Mammary epithelial cell (primary cell): ENCODE measurements at regions of chr6 and their contacts with region 1.

Region 1: GRCh38 chr6:57316581-57317059 is 810 bp upstream of the PRIM2 start:
- DNase-seq: peak; percentile 87
- H3K4me3 ChIP-seq: peak overlapping the region; percentile 74 to 87 (median 85)
- H3K27ac ChIP-seq: peak overlapping the region; percentile 83
- H3K4me1 ChIP-seq: peaks cover 33% of the 10 kb centered on the region
- H3K27me3 ChIP-seq: no peaks in the 10 kb centered on the region
- CTCF ChIP-seq: peak; percentile 75 to 84

Region 2: DNA sequence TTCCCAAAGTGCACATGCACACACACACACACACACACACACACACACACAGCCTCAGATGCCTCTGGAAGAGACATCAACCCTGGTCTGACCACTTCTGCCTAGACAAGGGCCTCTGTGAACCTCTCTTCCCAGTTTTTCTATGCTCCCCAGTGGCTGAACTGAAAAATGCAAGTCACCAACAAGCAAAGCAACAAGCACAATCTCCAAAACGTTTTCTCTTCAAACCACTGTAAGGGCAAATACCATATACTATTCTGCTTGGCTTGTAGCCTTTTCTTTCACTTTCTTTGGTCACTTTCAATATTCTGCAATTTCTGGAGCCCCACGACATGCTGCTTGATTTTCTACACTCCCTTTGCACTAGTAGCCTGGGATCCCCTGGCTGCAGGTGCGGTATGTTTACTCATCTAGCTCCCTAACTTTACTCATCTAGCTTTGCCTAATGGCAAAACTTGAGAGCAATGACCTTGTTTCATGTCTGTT is 552.5 kb before region 1 on chr6:
- CTCF ChIA-PET with region 1: no interaction called
- dilution Hi-C with region 1: no loop called
- in situ Hi-C with region 1: no loop called
- intact Hi-C with region 1: loop called (anchors 5 kb)
- DNase-seq: peak; percentile 62
- H3K4me3 ChIP-seq: no peak overlapping the region
- H3K27ac ChIP-seq: no peak overlapping the region
- H3K4me1 ChIP-seq: peaks cover 29% of the 10 kb centered on the region
- H3K27me3 ChIP-seq: no peaks in the 10 kb centered on the region
- CTCF ChIP-seq: peak; percentile 57 to 63

Region 3: GRCh38 chr6:56949925-56950495 is 366.6 kb before region 1 on chr6:
- CTCF ChIA-PET with region 1: interaction called, 5 read pairs
- dilution Hi-C with region 1: loop called (anchors 10 kb)
- in situ Hi-C with region 1: no loop called
- intact Hi-C with region 1: loop called (anchors 1 kb)
- DNase-seq: no peak
- H3K4me3 ChIP-seq: no peak overlapping the region
- H3K27ac ChIP-seq: no peak overlapping the region
- H3K4me1 ChIP-seq: peaks cover 32% of the 10 kb centered on the region
- H3K27me3 ChIP-seq: no peaks in the 10 kb centered on the region
- CTCF ChIP-seq: no peak

Region 4: GRCh38 chr6:57021086-57021720 is 295.4 kb before region 1 on chr6:
- CTCF ChIA-PET with region 1: no interaction called
- dilution Hi-C with region 1: no loop called
- in situ Hi-C with region 1: no loop called
- intact Hi-C with region 1: loop called (anchors 1 kb)
- DNase-seq: peak; percentile 30
- H3K4me3 ChIP-seq: no peak overlapping the region
- H3K27ac ChIP-seq: no peak overlapping the region
- H3K4me1 ChIP-seq: no peaks in the 10 kb centered on the region
- H3K27me3 ChIP-seq: no peaks in the 10 kb centered on the region
- CTCF ChIP-seq: peak; percentile 47 to 53

Region 5: DNA sequence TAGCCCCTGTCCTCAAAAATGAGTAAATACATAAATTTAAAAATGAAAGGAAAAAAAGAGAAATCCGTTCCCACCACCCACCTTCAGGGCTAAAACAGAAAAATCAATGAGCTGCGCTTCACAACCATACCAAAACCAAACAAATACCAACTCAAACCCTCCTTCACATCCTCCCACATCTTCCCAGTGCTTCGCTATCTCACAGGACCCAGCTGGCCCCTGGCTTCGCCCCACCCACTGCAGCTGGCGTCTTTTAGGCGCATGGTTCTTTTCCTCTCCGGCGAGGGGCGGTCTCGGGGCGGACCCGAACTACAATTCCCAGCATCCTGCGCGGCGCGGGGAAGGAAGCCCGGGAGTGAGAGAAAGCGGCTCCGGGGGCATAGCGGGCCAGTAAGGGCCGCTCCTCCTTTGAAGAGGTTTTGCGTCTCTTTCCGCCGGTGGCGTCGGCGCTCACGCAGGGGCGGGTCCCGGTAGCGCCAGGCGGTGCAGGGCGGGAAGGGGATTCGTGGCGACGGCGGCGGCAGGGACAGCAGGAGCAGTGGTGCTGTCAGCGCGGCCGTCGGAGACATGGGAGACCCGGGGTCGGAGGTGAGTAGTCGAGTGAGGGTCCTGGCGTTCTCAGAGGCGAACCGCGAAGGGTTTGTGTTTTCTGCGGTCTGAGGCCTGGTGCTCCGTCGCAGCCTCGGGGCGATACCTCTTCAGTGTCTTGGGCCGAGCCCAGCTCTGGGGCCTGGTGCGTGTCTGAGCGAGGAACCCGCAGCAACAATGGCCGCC is 226.7 kb before region 1 on chr6 and contains the start of gene ZNF451:
- CTCF ChIA-PET with region 1: no interaction called
- dilution Hi-C with region 1: no loop called
- in situ Hi-C with region 1: no loop called
- intact Hi-C with region 1: loop called (anchors 5 kb)
- DNase-seq: peak; percentile 97
- H3K4me3 ChIP-seq: peak within 1 kb of the TSS; percentile 66 to 70 (median 68)
- H3K27ac ChIP-seq: peak within 1 kb of the TSS; percentile 62
- H3K4me1 ChIP-seq: peaks cover 11% of the 10 kb centered on the region
- H3K27me3 ChIP-seq: no peaks in the 10 kb centered on the region
- CTCF ChIP-seq: no peak
- total RNA-seq, gene ZNF451: 63.0 to 71.7 TPM

Region 6: GRCh38 chr6:57158658-57159057 is 158.0 kb before region 1 on chr6:
- CTCF ChIA-PET with region 1: no interaction called
- dilution Hi-C with region 1: no loop called
- in situ Hi-C with region 1: no loop called
- intact Hi-C with region 1: no loop called
- DNase-seq: peak; percentile 58
- H3K4me3 ChIP-seq: no peak overlapping the region
- H3K27ac ChIP-seq: no peak overlapping the region
- H3K4me1 ChIP-seq: peaks cover 17% of the 10 kb centered on the region
- H3K27me3 ChIP-seq: no peaks in the 10 kb centered on the region
- CTCF ChIP-seq: no peak

Region 7: DNA sequence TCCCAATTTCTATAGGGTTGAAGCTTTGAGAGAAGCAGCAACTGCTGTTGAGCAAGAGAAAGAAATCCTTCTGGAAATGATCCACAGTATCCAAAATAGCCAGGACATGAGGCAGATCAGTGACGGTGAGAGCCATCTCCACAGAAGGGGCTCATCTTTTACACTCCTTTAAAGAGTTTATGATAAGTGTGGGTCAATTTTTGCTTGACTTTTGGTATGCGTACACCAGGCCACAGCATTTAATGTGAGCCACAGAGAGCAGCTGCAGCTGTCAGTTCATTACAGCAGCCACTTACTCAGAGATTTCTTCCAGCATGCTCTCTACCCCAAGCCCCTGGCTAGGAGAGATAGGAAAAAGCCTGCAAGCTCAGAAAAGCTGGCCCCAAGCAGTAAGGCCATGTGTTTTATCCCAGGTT is 134.6 kb before region 1 on chr6:
- CTCF ChIA-PET with region 1: no interaction called
- dilution Hi-C with region 1: no loop called
- in situ Hi-C with region 1: loop called in 1 of 2 experiments (anchors 10 kb)
- intact Hi-C with region 1: no loop called
- DNase-seq: no peak
- H3K4me3 ChIP-seq: no peak overlapping the region
- H3K27ac ChIP-seq: no peak overlapping the region
- H3K4me1 ChIP-seq: no peaks in the 10 kb centered on the region
- H3K27me3 ChIP-seq: no peaks in the 10 kb centered on the region
- CTCF ChIP-seq: no peak

Region 8: GRCh38 chr6:57221936-57222742 is 94.5 kb before region 1 on chr6 and contains the start of gene RAB23:
- CTCF ChIA-PET with region 1: interaction called, 4 read pairs
- dilution Hi-C with region 1: no loop called
- in situ Hi-C with region 1: no loop called
- intact Hi-C with region 1: loop called (anchors 1 kb)
- DNase-seq: peak; percentile 82
- H3K4me3 ChIP-seq: peak within 1 kb of the TSS; percentile 57 to 92 (median 76)
- H3K27ac ChIP-seq: peak within 1 kb of the TSS; percentile 62
- H3K4me1 ChIP-seq: peaks cover 6% of the 10 kb centered on the region
- H3K27me3 ChIP-seq: no peaks in the 10 kb centered on the region
- CTCF ChIP-seq: no peak
- total RNA-seq, gene RAB23: 13.2 to 14.9 TPM